ENCODE measurements at regions of chr1 and their contacts with region 1.

Region 1: DNA sequence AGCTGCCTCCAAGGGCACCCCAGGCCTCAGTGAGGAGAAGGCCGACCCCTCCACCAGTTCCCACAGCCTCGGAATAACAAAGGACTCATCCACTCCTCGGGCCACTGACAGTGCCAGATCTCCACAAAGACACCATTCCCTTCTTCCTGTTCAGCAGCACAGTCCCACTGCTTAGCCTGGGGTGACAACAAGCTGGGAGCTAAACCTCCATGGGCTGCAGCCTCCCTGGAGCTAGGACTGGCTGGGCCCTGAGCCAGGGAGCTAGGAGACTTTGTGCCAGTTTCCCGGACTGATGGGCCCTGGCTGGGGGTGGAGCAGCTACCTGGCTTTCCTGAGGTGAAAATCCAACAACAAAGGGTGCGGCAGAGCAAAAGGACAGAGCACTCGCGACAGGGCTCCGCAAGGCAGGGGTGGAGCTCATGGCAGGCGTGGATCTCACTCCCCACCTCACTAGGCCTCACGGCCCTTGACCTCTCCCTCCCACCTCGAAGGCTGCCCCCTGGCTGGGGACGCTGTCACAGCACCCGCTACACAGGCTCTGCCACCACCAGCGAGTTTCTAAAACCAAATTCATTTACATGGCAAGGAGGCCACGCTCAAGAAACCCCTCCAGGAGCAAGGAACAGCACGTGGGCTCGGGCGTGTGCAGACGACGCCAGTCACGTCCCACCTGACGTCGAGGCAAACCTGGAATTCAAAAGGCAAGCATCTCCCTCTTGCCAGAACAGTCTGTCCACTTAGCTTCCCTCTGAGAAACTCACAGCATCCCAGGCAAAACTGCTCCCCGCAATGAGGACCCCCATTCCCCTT is 13.8 kb downstream of the SLC35E2B start:
- DNase-seq: peak; percentile 88
- ATAC-seq: peak; percentile 82
- H3K4me3 Mint-ChIP-seq: peak overlapping the region; percentile 89
- H3K27ac Mint-ChIP-seq: peak overlapping the region; percentile 98
- H3K4me1 Mint-ChIP-seq: peaks cover 26% of the 10 kb centered on the region
- H3K27me3 Mint-ChIP-seq: no peaks in the 10 kb centered on the region

Region 2: GRCh38 chr1:1630271-1630964 is 48.4 kb before region 1 on chr1:
- CTCF ChIA-PET with region 1: interaction called, 5 read pairs
- POLR2A ChIA-PET with region 1: interaction called, 10 read pairs
- DNase-seq: peak; percentile 96
- ATAC-seq: peak; percentile 77
- H3K4me3 Mint-ChIP-seq: peak overlapping the region; percentile 76
- H3K27ac Mint-ChIP-seq: peak overlapping the region; percentile 97
- H3K4me1 Mint-ChIP-seq: peaks cover 9% of the 10 kb centered on the region
- H3K27me3 Mint-ChIP-seq: peaks cover 4% of the 10 kb centered on the region

Region 3: DNA sequence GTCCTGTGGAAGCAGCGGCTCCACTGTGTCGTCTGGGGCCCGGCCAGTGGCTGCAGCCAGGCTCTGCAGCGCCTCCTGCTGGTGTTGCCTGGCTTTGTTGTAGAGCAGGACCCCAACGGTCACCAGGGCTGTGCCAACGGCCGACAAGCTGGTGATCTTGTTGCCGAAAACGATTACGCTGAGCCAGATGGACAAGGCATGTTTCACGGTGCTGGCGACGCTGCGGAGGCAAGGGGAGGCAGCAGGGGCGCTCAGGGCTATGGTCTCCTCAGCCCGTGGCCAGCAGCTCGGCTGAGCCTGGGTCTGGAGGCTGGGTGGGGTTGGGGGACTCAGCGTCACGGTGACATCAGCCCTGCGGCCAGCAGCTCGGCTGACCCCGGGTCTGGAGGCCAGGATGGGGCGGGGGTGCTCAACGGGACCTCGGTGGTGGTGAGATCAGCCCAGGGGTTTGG is 13.0 kb before region 1 on chr1:
- CTCF ChIA-PET with region 1: interaction called, 20 read pairs
- POLR2A ChIA-PET with region 1: interaction called, 6 read pairs
- DNase-seq: no peak
- ATAC-seq: peak; percentile 42
- H3K4me3 Mint-ChIP-seq: no peak overlapping the region
- H3K27ac Mint-ChIP-seq: no peak overlapping the region
- H3K4me1 Mint-ChIP-seq: peaks cover 9% of the 10 kb centered on the region
- H3K27me3 Mint-ChIP-seq: no peaks in the 10 kb centered on the region

Region 4: DNA sequence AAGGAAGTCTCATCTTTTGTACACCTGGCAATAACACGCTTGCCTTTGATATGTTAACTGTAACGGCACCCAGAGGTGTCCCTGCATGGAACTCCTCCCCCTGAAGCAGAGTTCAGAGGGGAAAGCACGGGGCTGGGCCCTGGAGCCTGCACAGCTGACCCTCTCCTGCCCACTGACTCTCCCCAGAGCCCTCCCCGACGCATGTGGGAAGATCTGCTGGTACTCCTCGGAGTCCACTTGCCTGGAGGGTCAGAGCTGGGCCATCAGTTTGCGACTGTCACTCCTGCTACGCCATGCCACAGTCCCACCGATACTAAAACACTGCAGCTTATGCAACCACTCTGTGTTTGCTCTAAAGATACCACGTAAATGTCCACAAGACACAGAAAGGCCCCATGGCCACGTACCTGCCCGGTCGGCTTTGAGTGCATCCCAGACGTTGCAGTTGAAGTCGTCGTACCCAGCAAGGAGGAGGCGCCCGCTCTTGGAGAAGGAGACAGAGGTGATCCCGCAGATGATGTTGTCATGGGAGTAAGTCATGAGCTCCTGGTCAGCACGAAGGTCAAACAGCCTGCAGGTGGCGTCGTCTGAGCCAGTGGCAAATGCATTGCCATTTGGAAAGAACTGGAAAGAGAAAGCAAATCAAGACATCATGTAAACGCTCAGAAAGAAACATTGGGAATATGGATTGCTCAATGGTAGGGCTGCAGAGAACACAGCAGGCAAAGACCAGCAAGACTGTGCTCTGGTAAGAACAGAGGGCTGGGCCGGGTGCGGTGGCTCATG is 110.1 kb after region 1 on chr1:
- CTCF ChIA-PET with region 1: no interaction called
- POLR2A ChIA-PET with region 1: no interaction called
- DNase-seq: no peak
- ATAC-seq: no peak
- H3K4me3 Mint-ChIP-seq: no peak overlapping the region
- H3K27ac Mint-ChIP-seq: no peak overlapping the region
- H3K4me1 Mint-ChIP-seq: no peaks in the 10 kb centered on the region
- H3K27me3 Mint-ChIP-seq: no peaks in the 10 kb centered on the region

Measured in activated CD8-positive, alpha-beta T cell treated with anti-CD3 and anti-CD28 coated beads, Interleukin-2, amount 10 ng/mL, durations not matched to agents 7 days and 5 days (primary cell).